ENCODE measurements at regions of chr9 and their contacts with region 1.

Region 1: DNA sequence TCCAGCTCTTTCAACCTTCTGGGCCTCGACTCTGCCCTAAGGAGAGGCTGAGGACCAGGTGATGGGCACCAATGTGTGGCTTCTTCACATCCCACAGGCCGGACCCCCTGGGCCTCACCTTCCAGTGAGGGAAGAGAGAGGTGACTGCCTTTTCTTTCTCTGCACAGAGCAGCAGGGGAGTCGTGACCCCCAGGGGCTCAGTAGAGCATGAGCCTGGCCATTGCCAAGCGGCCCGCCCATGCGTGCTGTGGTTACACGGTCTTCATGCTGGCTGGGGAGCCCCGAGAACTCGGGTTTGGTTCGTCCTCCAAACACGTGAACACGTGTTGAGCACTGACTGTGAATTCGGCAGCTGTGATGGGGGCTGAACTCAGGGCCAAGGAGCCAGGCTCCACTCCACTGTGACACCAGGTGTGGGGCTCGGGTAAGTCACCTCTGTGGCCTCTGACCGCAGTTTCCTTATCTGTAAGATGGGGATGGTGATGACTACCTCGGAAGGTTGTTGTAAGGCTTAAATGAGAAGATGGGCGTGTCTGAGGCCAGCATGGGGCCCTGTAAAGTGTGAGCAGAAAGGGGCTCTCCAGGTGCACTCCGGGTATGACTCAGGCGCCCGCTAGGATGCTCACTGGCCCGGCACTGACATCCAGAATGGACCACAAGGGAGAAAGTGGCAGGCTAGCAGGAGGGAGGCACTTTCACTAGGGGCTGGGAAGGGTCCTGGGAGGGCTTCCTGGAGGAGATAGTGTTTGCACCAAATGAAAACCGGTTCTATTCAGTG is 13.4 kb upstream of the GRHPR start:
- DNase-seq: peak; percentile 100
- ATAC-seq: peak; percentile 76
- H3K4me3 ChIP-seq: peak overlapping the region; percentile 57; the same call in 1 of the 2 replicates
- H3K27ac ChIP-seq: peak overlapping the region; percentile 100
- H3K4me1 ChIP-seq: peaks cover 66% of the 10 kb centered on the region
- H3K27me3 ChIP-seq: no peaks in the 10 kb centered on the region
- CTCF ChIP-seq: peak in 2 of 3 experiments; percentile 11 to 16; a peak in 1 of 6 replicates
- EP300 ChIP-seq: peak; percentile 98 to 99
- POLR2A ChIP-seq: peak; percentile 85
- RAD21 ChIP-seq: no peak

Region 2: DNA sequence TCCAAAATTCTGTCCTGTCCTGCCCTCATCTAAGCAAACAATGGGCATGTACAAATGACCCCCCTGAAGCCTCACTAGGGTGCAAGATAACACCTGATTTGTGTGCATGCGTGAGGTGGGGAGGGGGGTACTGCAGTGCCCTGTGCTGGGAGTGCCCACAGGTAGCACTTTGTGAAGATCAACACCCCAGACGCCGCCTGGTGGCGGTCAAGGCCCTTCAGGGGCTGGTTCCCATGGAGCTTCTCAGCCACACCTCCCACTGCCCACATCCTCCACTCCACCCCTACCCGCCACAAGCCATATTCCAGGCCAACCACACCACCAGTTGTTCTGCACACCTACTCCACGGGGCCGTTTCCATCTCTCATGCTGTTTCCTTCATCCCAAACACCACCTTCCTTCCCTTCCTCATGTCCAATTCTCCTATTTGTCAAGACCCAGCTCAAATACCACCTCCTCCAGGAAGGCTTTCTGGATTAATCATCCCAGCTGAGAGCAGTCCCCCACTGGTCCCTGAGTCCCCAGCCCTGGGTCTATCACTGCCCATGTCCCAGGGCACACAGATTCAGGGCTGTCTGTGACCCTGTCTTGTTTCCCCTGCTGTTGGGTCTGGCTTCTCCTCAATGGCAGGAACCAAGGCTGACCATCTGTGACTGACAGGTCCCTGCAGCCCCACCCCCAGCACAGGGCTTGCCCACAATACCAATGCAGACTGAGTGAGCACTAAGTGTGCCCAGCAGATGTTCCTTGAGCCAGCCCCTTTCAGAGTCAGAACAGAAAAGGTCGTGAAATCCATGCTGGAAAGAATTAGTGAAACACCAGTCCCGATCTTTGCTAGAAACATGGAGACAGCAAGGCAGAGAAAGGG is 553.4 kb before region 1 on chr9:
- CTCF ChIA-PET with region 1: no interaction called
- POLR2A ChIA-PET with region 1: no interaction called
- RAD21 ChIA-PET with region 1: no interaction called
- SMC1A ChIA-PET with region 1: no interaction called
- in situ Hi-C with region 1: no loop called
- intact Hi-C with region 1: no loop called
- DNase-seq: no peak
- ATAC-seq: peak; percentile 91
- H3K4me3 ChIP-seq: no peak overlapping the region
- H3K27ac ChIP-seq: no peak overlapping the region; the same call in 1 of the 2 replicates
- H3K4me1 ChIP-seq: peaks cover 12% of the 10 kb centered on the region
- H3K27me3 ChIP-seq: no peaks in the 10 kb centered on the region
- CTCF ChIP-seq: peak; percentile 24 to 42 (median 41); a peak in 4 of 6 replicates
- EP300 ChIP-seq: no peak
- POLR2A ChIP-seq: no peak
- RAD21 ChIP-seq: 0 out of 2 replicates have a peak, but pooled peaks have one; percentile 7

Region 3: GRCh38 chr9:36873247-36873875 is 535.8 kb before region 1 on chr9:
- CTCF ChIA-PET with region 1: interaction called, 27 read pairs
- POLR2A ChIA-PET with region 1: no interaction called
- RAD21 ChIA-PET with region 1: interaction called, 5 read pairs
- SMC1A ChIA-PET with region 1: interaction called, 4 read pairs
- in situ Hi-C with region 1: no loop called
- intact Hi-C with region 1: loop called (anchors 10 kb)
- DNase-seq: peak; percentile 28
- ATAC-seq: peak; percentile 95
- H3K4me3 ChIP-seq: no peak overlapping the region
- H3K27ac ChIP-seq: no peak overlapping the region
- H3K4me1 ChIP-seq: peaks cover 27% of the 10 kb centered on the region
- H3K27me3 ChIP-seq: no peaks in the 10 kb centered on the region
- CTCF ChIP-seq: peak; percentile 86 to 91 (median 89); a peak in 5 of 6 replicates
- EP300 ChIP-seq: no peak
- POLR2A ChIP-seq: no peak
- RAD21 ChIP-seq: peak; percentile 86

Region 4: DNA sequence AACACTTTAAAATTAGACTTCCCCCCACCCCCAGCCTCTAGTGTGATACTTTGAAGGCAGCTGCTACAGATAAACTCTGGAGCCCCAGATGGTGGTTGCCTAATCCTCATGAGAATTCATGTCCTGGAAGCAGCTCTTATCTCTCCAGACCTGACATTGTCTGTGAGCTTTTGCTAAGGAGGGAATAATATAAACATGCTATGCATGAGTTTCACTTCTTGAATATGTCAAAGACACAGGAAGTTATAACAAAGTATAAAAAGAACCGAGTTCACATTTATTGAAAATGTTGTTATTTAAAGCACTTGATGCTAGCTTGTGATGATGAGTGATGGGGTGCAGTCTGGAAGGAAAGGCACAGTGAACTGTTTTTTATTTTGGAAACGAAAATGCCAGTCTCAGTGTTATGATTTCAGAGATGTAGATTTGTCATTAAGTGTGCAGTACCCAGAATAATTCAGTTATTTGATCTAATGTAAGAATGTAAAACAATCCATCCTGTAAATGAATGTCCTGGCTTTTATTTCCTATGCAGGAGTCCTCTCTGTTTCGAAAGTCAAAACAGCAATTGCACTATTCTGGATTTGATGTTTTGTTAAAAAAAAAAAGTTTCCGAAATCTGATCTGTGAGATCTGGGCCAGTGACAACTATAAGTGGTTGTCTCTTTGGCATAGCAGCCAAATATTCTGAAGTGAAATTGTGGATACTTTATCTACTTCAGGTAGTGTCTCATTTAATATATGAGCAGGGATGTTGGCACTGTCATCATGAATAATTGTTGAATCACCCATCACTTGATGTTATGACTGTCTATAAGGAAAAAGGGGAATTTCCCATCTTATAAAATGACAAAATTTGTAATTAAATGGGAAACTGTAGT is 211.7 kb before region 1 on chr9:
- CTCF ChIA-PET with region 1: interaction called, 7 read pairs
- POLR2A ChIA-PET with region 1: no interaction called
- RAD21 ChIA-PET with region 1: interaction called, 4 read pairs
- SMC1A ChIA-PET with region 1: interaction called, 5 read pairs
- in situ Hi-C with region 1: no loop called
- intact Hi-C with region 1: loop called (anchors 5 kb)
- DNase-seq: peak; percentile 79
- ATAC-seq: peak; percentile 70
- H3K4me3 ChIP-seq: no peak overlapping the region; the same call in 1 of the 2 replicates
- H3K27ac ChIP-seq: peak overlapping the region; percentile 61
- H3K4me1 ChIP-seq: peaks cover 47% of the 10 kb centered on the region
- H3K27me3 ChIP-seq: no peaks in the 10 kb centered on the region
- CTCF ChIP-seq: no peak
- EP300 ChIP-seq: peak; percentile 34 to 55; a peak in 1 of 4 replicates
- POLR2A ChIP-seq: no peak
- RAD21 ChIP-seq: 0 out of 2 replicates have a peak, but pooled peaks have one; percentile 14

Region 5: DNA sequence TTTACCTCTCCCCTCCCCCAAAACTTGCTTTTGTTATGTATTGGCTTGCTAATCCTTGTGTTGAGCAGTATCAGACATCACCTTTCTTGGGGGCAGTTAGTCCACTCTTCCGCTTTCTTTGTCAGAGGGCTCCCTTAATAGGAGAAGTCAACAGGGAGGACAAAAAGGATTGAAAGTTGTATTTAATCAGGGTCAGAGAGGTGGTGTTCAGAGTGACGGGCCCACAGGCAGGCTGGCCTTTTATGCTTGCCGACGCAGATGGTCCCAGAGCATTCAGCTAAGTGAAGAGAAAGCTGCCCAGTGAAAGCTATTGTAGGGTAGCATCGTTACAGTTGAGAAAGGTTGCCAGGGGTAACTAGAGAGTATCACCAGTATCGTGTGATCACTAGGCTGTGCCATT is 157.7 kb before region 1 on chr9:
- CTCF ChIA-PET with region 1: no interaction called
- POLR2A ChIA-PET with region 1: no interaction called
- RAD21 ChIA-PET with region 1: no interaction called
- SMC1A ChIA-PET with region 1: no interaction called
- in situ Hi-C with region 1: no loop called
- intact Hi-C with region 1: no loop called
- DNase-seq: no peak
- ATAC-seq: peak; percentile 97
- H3K4me3 ChIP-seq: no peak overlapping the region
- H3K27ac ChIP-seq: peak overlapping the region; percentile 14; the same call in 1 of the 2 replicates
- H3K4me1 ChIP-seq: peaks cover 5% of the 10 kb centered on the region
- H3K27me3 ChIP-seq: no peaks in the 10 kb centered on the region
- CTCF ChIP-seq: no peak
- EP300 ChIP-seq: no peak
- POLR2A ChIP-seq: no peak
- RAD21 ChIP-seq: no peak

Region 6: GRCh38 chr9:37293664-37294524 is 115.2 kb before region 1 on chr9:
- CTCF ChIA-PET with region 1: interaction called, 8 read pairs
- POLR2A ChIA-PET with region 1: interaction called, 4 read pairs
- RAD21 ChIA-PET with region 1: interaction called, 4 read pairs
- SMC1A ChIA-PET with region 1: interaction called, 16 read pairs
- in situ Hi-C with region 1: no loop called
- intact Hi-C with region 1: loop called (anchors 1 kb)
- DNase-seq: peak; percentile 91
- ATAC-seq: peak; percentile 73
- H3K4me3 ChIP-seq: no peak overlapping the region
- H3K27ac ChIP-seq: peak overlapping the region; percentile 90
- H3K4me1 ChIP-seq: peaks cover 60% of the 10 kb centered on the region
- H3K27me3 ChIP-seq: no peaks in the 10 kb centered on the region
- CTCF ChIP-seq: no peak
- EP300 ChIP-seq: peak; percentile 95 to 96
- POLR2A ChIP-seq: no peak
- RAD21 ChIP-seq: no peak

Region 7: DNA sequence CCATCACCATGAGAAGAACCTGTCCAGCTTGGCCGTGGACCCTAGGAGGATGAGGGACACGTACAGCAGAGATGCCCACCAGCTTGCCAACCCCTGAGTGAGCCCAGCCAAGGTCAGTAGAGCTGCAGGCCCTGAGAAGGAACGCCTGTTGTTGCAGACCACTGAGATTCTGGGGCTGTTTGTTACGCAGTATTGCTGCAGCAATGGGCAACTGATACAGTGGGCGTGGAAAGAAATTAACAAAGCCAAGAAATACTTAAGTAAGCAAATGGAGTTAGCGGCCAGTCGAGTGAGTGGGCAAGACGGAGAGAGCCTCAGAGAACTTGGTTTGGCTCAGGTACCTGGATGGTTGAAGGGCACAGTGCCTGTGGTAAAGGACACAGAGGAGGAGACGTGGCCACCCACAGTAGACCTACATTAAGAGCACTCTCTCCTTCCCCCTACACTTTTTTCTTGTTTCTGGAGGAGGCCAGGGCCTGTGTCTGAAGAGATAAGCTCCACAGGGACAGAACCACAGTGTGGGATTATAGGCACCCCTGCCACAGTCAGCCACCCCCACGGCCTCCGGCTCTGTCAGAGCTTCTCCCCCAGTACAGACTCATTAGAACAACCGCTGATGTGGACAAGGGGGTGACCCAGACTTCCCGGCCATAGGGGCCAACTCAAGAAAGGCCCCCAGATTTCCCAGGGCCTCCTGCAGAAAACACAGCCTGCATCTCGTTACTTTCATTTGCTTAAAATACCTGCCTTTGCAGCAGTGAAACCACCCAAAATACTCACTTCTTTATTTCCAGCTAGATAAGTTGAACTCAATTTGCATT is 26.8 kb before region 1 on chr9:
- CTCF ChIA-PET with region 1: interaction called, 220 read pairs
- POLR2A ChIA-PET with region 1: interaction called, 212 read pairs
- RAD21 ChIA-PET with region 1: interaction called, 24 read pairs
- SMC1A ChIA-PET with region 1: interaction called, 16 read pairs
- in situ Hi-C with region 1: no loop called
- intact Hi-C with region 1: loop called (anchors 1 kb)
- DNase-seq: peak; percentile 70
- ATAC-seq: peak; percentile 57
- H3K4me3 ChIP-seq: no peak overlapping the region
- H3K27ac ChIP-seq: peak overlapping the region; percentile 92
- H3K4me1 ChIP-seq: peaks cover 65% of the 10 kb centered on the region
- H3K27me3 ChIP-seq: no peaks in the 10 kb centered on the region
- CTCF ChIP-seq: no peak
- EP300 ChIP-seq: peak; percentile 75 to 80
- POLR2A ChIP-seq: no peak
- RAD21 ChIP-seq: peak; percentile 9; the same call in 1 of the 2 replicates

Region 8: DNA sequence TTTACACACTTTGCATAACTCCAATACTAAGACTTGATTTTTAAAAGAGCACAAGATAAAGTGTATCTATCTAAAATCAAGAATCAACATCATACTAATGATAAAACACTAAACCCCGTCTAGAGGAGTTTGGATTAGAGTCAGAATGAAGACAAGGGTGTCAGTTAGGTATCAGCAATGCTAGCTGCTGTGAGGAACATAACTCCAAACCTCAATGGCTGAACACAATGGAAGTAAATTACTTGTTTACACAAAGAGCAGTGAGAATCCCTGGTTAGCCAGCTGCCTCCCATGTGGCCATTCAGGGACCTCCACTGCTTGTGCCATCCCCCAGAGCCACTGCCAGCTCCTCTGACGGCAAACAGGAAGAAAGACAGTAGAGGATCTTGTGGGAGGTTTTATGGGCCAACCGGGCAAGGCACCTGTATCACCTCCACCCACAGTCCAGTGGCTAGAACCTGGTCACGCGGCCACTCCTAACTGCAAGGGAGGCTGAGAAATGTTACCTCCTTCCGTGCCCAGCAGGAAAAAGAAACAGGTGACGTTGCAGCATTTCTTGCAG is 10.6 kb before region 1 on chr9:
- CTCF ChIA-PET with region 1: interaction called, 59 read pairs
- POLR2A ChIA-PET with region 1: interaction called, 10 read pairs
- RAD21 ChIA-PET with region 1: interaction called, 31 read pairs
- SMC1A ChIA-PET with region 1: interaction called, 13 read pairs
- in situ Hi-C with region 1: no loop called
- intact Hi-C with region 1: no loop called
- DNase-seq: no peak
- ATAC-seq: no peak
- H3K4me3 ChIP-seq: no peak overlapping the region
- H3K27ac ChIP-seq: peak overlapping the region; percentile 60
- H3K4me1 ChIP-seq: peaks cover 38% of the 10 kb centered on the region
- H3K27me3 ChIP-seq: no peaks in the 10 kb centered on the region
- CTCF ChIP-seq: no peak
- EP300 ChIP-seq: no peak
- POLR2A ChIP-seq: 0 out of 2 replicates have a peak, but pooled peaks have one; percentile 40
- RAD21 ChIP-seq: no peak

Measured in GM12878 (cell line).